ENCODE measurements at regions of chr21 and their contacts with region 1.

Region 1: GRCh38 chr21:42258153-42258884 is 39.4 kb downstream of the ABCG1 start:
- DNase-seq: peak; percentile 65 to 82
- ATAC-seq: peak; percentile 76

Region 2: GRCh38 chr21:42145569-42146272 is 112.6 kb before region 1 on chr21:
- intact Hi-C with region 1: loop called in 1 of 2 experiments (anchors 10 kb)
- DNase-seq: peak in 1 of 2 donors; percentile 42
- ATAC-seq: peak; percentile 84

Region 3: DNA sequence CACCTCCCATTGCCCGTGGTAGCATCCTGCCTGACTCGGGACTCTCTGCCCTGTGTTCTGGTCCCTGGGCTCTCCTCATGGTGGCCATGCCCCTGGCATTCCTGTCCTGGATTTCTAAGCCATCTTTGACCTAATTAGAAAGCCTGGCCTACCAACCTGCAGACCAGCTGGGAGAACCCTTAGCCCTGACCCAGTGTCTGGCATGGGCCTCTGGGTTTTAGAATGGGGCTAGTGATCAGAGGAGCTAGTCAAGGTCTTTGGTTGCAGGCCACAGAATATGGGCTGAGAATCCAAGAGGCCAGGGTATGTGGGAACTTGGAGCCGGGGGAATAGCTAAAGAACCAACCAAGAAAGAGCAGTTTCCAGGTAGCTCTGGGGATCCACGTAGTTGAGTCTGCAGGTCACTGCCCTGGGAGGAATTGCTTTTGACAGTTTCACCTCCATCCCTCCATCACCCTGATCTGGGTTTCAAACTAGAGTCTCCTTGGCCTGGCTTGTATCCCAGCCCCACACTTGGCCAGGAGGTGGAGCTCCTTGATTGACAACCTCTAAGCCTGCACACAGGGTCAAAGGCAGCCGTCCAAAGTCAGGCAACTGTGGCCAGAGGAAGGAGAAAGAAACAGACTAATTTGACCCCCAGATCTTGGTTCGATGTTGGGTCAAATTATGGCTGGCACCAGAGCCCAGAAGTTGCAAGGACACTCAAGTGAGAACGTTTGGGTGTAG is 94.1 kb before region 1 on chr21:
- intact Hi-C with region 1: loop called in 1 of 2 experiments (anchors 10 kb)
- DNase-seq: peak; percentile 81 to 84
- ATAC-seq: peak; percentile 88